Activated CD8-positive, alpha-beta T cell treated with anti-CD3 and anti-CD28 coated beads, Interleukin-2, amount 10 ng/mL, durations not matched to agents 7 days and 5 days (primary cell): ENCODE measurements at regions of chr12 and their contacts with region 1.

Region 1: GRCh38 chr12:110563702-110564640 is 19.1 kb downstream of the PPTC7 start:
- DNase-seq: no peak
- ATAC-seq: no peak
- H3K4me3 Mint-ChIP-seq: no peak overlapping the region
- H3K27ac Mint-ChIP-seq: peak overlapping the region; percentile 56
- H3K4me1 Mint-ChIP-seq: peaks cover 47% of the 10 kb centered on the region
- H3K27me3 Mint-ChIP-seq: no peaks in the 10 kb centered on the region

Region 2: DNA sequence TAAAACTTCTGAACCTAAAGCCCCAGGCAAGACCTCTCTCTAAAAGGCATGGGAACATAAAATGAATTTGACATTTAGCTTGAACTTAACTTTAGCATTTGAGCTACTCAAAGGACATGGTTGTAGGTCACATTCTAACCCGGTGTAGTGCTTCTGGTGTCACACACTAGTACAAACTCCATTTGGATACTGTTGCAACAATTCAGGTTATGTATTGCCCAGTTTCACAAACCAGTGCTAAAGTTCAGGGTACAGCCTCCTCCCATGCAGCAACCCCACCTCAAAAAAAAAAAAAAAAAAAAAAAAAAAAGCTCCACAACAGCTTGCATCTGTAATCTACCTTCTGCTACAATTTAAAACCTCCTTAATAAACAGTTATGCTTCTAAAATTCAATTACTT is 11.4 kb after region 1 on chr12:
- CTCF ChIA-PET with region 1: interaction called, 11 read pairs
- POLR2A ChIA-PET with region 1: interaction called, 6 read pairs
- DNase-seq: no peak
- ATAC-seq: no peak
- H3K4me3 Mint-ChIP-seq: no peak overlapping the region
- H3K27ac Mint-ChIP-seq: no peak overlapping the region
- H3K4me1 Mint-ChIP-seq: peaks cover 51% of the 10 kb centered on the region
- H3K27me3 Mint-ChIP-seq: no peaks in the 10 kb centered on the region

Region 3: DNA sequence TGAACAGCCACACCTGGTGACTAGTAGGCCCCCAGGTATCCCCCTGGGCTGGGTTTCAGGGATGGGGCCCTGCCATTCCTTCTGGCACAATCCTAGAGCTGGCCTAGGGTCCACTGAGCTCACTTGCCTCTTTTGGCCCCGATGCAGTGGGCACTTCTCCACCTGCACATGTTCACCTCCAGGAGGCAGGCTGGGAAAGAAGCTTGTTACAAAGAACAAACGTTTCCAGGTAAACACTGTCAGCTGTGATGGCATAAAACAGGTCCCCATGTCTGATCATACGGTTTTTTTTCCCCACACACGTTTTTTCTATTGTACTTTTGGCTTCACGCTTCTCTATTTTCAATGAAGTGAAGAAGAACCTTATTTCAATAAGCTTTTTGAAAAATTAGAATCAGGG is 140.8 kb after region 1 on chr12:
- CTCF ChIA-PET with region 1: no interaction called
- POLR2A ChIA-PET with region 1: no interaction called
- DNase-seq: peak; percentile 35
- ATAC-seq: peak; percentile 42
- H3K4me3 Mint-ChIP-seq: no peak overlapping the region
- H3K27ac Mint-ChIP-seq: no peak overlapping the region
- H3K4me1 Mint-ChIP-seq: no peaks in the 10 kb centered on the region
- H3K27me3 Mint-ChIP-seq: no peaks in the 10 kb centered on the region